Activated naive CD4-positive, alpha-beta T cell treated with anti-CD3 and anti-CD28 coated beads for 36 hours (primary cell): ENCODE measurements at regions of chr14 and their contacts with region 1.

Region 1: GRCh38 chr14:69673578-69674305 is 62.3 kb downstream of the SUSD6 start:
- DNase-seq: peak; percentile 37
- H3K4me3 Mint-ChIP-seq: peak overlapping the region; percentile 49
- H3K27ac Mint-ChIP-seq: peak overlapping the region; percentile 99
- H3K4me1 Mint-ChIP-seq: peaks cover 94% of the 10 kb centered on the region
- H3K27me3 Mint-ChIP-seq: no peaks in the 10 kb centered on the region

Region 2: DNA sequence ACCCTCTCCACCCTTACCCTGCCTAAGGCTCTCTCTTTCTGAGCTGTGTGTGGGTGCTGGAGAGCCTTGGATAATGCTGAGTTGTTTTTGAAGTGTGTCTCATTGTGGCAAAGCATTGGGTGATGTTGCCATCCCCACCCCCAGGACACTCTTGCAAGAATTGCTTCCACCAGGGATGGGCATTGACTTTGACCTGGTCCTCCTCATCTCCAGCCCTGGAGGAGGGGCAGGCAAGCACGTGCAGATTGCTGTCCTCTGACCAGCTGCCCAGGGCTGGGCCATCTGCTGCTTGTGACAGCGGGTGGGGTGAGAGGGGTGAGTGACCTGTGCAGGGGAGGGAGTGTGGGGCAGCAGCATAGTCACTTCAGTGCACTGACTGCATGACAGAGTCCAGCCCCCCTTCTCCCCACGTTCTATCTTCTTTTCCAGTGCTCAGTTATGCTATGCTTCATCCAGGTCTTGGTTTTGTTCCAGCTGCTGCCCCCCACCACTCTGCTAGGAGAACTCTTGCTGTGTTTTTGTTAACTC is 36.2 kb before region 1 on chr14:
- CTCF ChIA-PET with region 1: interaction called, 7 read pairs
- intact Hi-C with region 1: loop called (anchors 1 kb)
- DNase-seq: peak; percentile 31
- H3K4me3 Mint-ChIP-seq: peak overlapping the region; percentile 36
- H3K27ac Mint-ChIP-seq: peak overlapping the region; percentile 96
- H3K4me1 Mint-ChIP-seq: peaks cover 91% of the 10 kb centered on the region
- H3K27me3 Mint-ChIP-seq: no peaks in the 10 kb centered on the region

Region 3: GRCh38 chr14:69660344-69661193 is 13.2 kb before region 1 on chr14:
- CTCF ChIA-PET with region 1: interaction called, 3 read pairs
- intact Hi-C with region 1: loop called (anchors 1 kb)
- DNase-seq: peak; percentile 72
- H3K4me3 Mint-ChIP-seq: no peak overlapping the region
- H3K27ac Mint-ChIP-seq: peak overlapping the region; percentile 68
- H3K4me1 Mint-ChIP-seq: peaks cover 92% of the 10 kb centered on the region
- H3K27me3 Mint-ChIP-seq: no peaks in the 10 kb centered on the region

Region 4: DNA sequence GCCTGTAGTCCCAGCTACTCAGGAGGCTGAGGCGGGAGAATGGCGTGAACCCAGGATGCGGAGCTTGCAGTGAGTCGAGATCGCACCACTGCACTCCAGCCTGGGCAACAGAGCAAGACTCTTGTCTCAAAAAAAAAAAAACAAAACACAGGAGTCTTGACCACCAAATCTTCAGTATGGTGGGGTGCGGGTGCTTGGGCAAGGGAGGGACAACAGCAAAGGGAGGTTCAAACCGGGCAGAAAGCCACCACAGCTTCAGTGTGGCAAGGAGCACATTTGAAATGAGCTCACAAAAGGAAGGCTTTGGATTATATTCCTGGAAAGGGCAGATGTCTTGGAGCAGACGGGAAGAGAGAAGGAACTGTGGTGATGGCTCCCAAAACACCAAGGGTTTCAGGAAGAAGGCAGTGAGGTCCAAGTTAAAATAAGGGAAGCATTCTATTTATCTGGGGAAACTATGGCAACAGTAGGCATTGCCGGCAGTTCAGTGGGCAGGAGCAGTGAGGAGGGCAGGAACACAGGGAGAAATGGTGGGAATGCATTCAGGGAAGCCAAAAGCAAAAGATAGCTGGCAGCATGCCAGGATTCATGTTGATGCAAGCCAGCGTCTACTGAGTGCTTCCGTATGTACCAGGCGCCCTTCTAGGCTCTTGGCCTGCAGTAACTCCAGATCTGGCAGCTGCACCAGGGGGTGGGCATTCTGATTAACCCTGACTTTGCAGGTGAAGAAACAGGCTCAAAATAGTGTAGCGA is 42.2 kb after region 1 on chr14:
- CTCF ChIA-PET with region 1: no interaction called
- intact Hi-C with region 1: loop called (anchors 1 kb)
- DNase-seq: no peak
- H3K4me3 Mint-ChIP-seq: no peak overlapping the region
- H3K27ac Mint-ChIP-seq: peak overlapping the region; percentile 50
- H3K4me1 Mint-ChIP-seq: peaks cover 40% of the 10 kb centered on the region
- H3K27me3 Mint-ChIP-seq: no peaks in the 10 kb centered on the region

Region 5: DNA sequence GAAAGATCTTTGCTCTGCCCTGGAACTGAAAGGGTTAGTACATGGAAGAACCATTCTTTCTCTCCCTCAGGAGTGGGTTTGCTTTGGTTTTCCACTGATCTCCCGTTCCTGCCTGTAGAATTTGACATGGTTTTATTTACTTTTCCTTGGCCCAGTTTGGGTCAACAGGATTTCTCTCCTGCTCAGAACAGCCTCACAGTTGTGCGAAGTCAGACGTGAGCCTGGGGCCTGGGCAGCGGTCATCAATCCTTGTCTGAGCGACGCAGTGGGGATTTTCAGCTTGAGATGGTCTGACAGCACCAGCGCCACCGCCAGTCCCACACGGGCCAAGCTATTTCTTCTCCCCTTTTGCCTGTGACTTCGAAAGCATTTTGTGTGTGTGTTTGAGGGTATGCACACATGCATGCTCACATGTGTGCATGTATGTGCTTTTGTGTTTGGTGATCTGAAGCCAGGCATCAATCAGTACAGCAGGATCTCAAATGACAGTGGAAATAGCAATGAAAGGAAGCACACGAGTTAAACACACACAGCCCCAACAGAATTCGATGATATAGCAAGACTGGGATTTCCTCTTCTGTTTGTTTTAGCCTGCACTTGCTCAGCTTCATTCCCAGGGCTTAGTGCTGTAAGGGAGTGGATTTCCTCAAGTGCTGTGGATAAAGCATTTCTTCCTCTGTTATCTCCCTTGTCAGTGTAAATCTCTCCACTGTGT is 263.8 kb after region 1 on chr14:
- CTCF ChIA-PET with region 1: no interaction called
- intact Hi-C with region 1: no loop called
- DNase-seq: no peak
- H3K4me3 Mint-ChIP-seq: no peak overlapping the region
- H3K27ac Mint-ChIP-seq: no peak overlapping the region
- H3K4me1 Mint-ChIP-seq: no peaks in the 10 kb centered on the region
- H3K27me3 Mint-ChIP-seq: peaks cover 16% of the 10 kb centered on the region